Right ventricle myocardium superior (tissue), 1 donor: ENCODE measurements at regions of chr18 and their contacts with region 1.

Region 1: DNA sequence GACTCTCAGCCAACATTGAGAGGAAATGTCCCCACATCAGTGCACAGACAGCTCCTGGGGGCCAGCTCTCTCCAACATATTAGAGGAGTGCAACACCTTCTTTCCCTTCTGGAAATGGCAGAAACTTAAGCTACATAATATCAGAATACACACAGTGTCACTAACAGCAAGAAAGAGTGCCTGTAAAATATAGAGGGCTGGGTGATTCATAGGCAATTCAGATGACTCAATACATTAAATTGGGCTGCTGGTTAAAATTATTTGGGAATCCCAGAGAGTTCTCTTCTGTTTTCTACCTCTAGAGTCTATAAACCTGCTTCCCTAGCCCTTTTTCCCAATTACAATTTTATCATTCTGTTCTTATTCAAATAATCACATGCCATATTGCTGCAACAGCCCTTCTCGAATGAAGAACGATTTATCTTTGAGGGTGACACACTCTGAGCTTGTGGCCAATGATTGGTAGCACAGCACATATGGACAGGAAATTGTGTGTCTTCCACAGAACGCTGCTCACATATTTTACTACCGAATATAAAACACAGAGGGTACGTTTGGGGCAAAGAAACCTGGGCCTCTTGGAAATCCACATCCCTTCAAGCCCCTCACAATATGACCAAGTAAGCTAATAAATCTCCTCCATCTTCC is 381.2 kb downstream of the MBD2 start:
- DNase-seq: no peak
- ATAC-seq: no peak

Region 2: GRCh38 chr18:53698907-53699306 is 144.3 kb before region 1 on chr18:
- intact Hi-C with region 1: no loop called
- DNase-seq: no peak
- ATAC-seq: peak; percentile 85

Region 3: GRCh38 chr18:53745224-53745967 is 97.8 kb before region 1 on chr18:
- intact Hi-C with region 1: loop called (anchors 10 kb)
- DNase-seq: no peak
- ATAC-seq: no peak